ENCODE measurements at regions of chr15 and their contacts with region 1.

Region 1: DNA sequence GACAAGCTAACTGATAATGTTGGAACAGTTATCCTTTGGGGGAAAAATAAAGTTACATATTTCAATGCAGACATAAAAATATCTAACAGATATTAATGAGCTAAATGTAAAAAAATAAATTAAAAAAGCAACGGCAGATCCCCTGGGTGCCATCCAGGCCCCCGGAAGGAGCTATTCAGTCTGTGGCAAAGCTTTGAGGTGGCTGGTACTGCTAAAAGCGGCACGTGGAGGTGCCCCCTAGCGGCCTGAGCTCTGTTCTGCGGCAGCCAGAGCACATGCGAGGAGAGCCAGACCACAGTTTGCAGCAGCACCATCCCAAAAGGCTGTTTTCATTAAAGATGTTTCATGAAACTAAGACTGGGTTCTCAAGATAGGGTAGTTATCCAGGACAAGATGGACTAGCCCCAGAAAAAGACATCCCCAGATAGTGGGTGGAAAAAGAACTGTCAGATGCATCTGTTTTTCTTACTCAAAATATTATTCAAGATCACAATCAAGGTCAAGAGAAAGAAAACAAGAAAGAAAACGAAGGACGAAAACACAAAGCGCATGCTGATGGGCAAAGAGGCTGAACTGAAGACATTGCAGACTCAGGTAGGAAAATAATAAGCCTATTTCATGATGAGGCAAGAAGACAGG is 18.7 kb downstream of the AP3S2 start:
- DNase-seq: peak; percentile 69
- H3K4me3 ChIP-seq: no peak overlapping the region
- H3K27ac ChIP-seq: no peak overlapping the region
- H3K4me1 ChIP-seq: no peaks in the 10 kb centered on the region
- H3K27me3 ChIP-seq: no peaks in the 10 kb centered on the region
- CTCF ChIP-seq: peak; percentile 96 to 98
- POLR2A ChIP-seq: no peak

Region 2: GRCh38 chr15:89740137-89740536 is 134.9 kb before region 1 on chr15:
- CTCF ChIA-PET with region 1: interaction called, 95 read pairs
- POLR2A ChIA-PET with region 1: no interaction called
- dilution Hi-C with region 1: no loop called
- intact Hi-C with region 1: loop called (anchors 1 kb)
- DNase-seq: peak; percentile 86
- H3K4me3 ChIP-seq: no peak overlapping the region
- H3K27ac ChIP-seq: no peak overlapping the region
- H3K4me1 ChIP-seq: no peaks in the 10 kb centered on the region
- H3K27me3 ChIP-seq: peaks cover 3 to 4% of the 10 kb centered on the region in 2 experiments
- CTCF ChIP-seq: peak; percentile 75 to 77
- POLR2A ChIP-seq: no peak

Region 3: GRCh38 chr15:89776274-89777072 is 98.6 kb before region 1 on chr15 and contains the start of gene MESP2:
- CTCF ChIA-PET with region 1: interaction called, 29 read pairs
- POLR2A ChIA-PET with region 1: no interaction called
- dilution Hi-C with region 1: loop called (anchors 25 kb)
- intact Hi-C with region 1: no loop called
- DNase-seq: peak; percentile 88
- H3K4me3 ChIP-seq: peak within 1 kb of the TSS in 2 of 3 experiments; percentile 4 to 30
- H3K27ac ChIP-seq: no peak within 1 kb of the TSS
- H3K4me1 ChIP-seq: peaks cover 6% of the 10 kb centered on the region
- H3K27me3 ChIP-seq: no peaks in the 10 kb centered on the region
- CTCF ChIP-seq: peak; percentile 55 to 73
- POLR2A ChIP-seq: no peak
- total RNA-seq, gene MESP2: 0.42 TPM in 1 of 2 replicates, not detected in the other

Region 4: GRCh38 chr15:89802231-89802928 is 72.7 kb before region 1 on chr15:
- CTCF ChIA-PET with region 1: interaction called, 67 read pairs
- POLR2A ChIA-PET with region 1: no interaction called
- dilution Hi-C with region 1: no loop called
- intact Hi-C with region 1: no loop called
- DNase-seq: peak; percentile 66
- H3K4me3 ChIP-seq: no peak overlapping the region
- H3K27ac ChIP-seq: peak overlapping the region; percentile 65
- H3K4me1 ChIP-seq: peaks cover 17% of the 10 kb centered on the region
- H3K27me3 ChIP-seq: no peaks in the 10 kb centered on the region
- CTCF ChIP-seq: no peak
- POLR2A ChIP-seq: peak; percentile 56

Region 5: GRCh38 chr15:89828241-89829082 is 46.6 kb before region 1 on chr15:
- CTCF ChIA-PET with region 1: interaction called, 28 read pairs
- POLR2A ChIA-PET with region 1: no interaction called
- dilution Hi-C with region 1: no loop called
- intact Hi-C with region 1: no loop called
- DNase-seq: no peak
- H3K4me3 ChIP-seq: no peak overlapping the region
- H3K27ac ChIP-seq: no peak overlapping the region
- H3K4me1 ChIP-seq: peaks cover 5% of the 10 kb centered on the region
- H3K27me3 ChIP-seq: no peaks in the 10 kb centered on the region
- CTCF ChIP-seq: no peak
- POLR2A ChIP-seq: no peak

Region 6: GRCh38 chr15:89863918-89864317 is 11.1 kb before region 1 on chr15:
- CTCF ChIA-PET with region 1: interaction called, 16 read pairs
- POLR2A ChIA-PET with region 1: no interaction called
- dilution Hi-C with region 1: no loop called
- intact Hi-C with region 1: no loop called
- DNase-seq: no peak
- H3K4me3 ChIP-seq: no peak overlapping the region
- H3K27ac ChIP-seq: no peak overlapping the region
- H3K4me1 ChIP-seq: no peaks in the 10 kb centered on the region
- H3K27me3 ChIP-seq: no peaks in the 10 kb centered on the region
- CTCF ChIP-seq: no peak
- POLR2A ChIP-seq: no peak

Measured in endothelial cell of umbilical vein (primary cell).